Testis (tissue), 5 donors: ENCODE measurements at regions of chr3 and their contacts with region 1.

Region 1: GRCh38 chr3:101573449-101574387 is at the start of gene PCNP:
- DNase-seq: peak; percentile 100
- H3K4me3 ChIP-seq: peak within 1 kb of the TSS; percentile 88 to 90
- H3K27ac ChIP-seq: peak within 1 kb of the TSS; percentile 95 to 96
- H3K4me1 ChIP-seq: peaks cover 5% of the 10 kb centered on the region
- H3K27me3 ChIP-seq: no peaks in the 10 kb centered on the region
- CTCF ChIP-seq: peak; percentile 95 to 97 (median 95)
- POLR2A ChIP-seq: peak; percentile 59
- total RNA-seq, gene PCNP: 60.6 to 62.5 TPM

Region 2: GRCh38 chr3:101635954-101636798 is 62.5 kb after region 1 on chr3:
- intact Hi-C with region 1: no loop called
- DNase-seq: peak; percentile 65
- H3K4me3 ChIP-seq: no peak overlapping the region
- H3K27ac ChIP-seq: no peak overlapping the region
- H3K4me1 ChIP-seq: no peaks in the 10 kb centered on the region
- H3K27me3 ChIP-seq: no peaks in the 10 kb centered on the region
- CTCF ChIP-seq: peak in 2 of 3 experiments; percentile 41 to 51
- POLR2A ChIP-seq: no peak

Region 3: DNA sequence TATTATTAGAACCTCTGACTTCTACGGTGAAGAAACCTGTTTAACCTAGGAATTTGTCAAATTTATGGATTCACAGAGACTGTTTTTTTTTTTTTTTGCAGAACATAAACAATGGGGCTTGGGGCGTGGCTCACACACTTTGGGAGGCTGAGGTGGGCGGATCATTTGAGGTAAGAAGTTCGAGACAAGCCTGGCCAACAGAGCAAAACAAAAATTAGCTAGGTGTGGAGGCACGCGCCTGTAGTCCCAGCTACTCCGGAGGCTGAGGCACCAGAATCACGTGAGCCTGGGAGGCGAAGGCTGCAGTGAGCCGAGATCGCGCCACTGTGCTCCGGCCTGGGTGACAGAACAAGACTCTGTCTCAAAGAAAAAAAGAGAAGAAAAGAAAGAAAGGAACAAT is 100.2 kb after region 1 on chr3:
- intact Hi-C with region 1: no loop called
- DNase-seq: no peak
- H3K4me3 ChIP-seq: no peak overlapping the region
- H3K27ac ChIP-seq: no peak overlapping the region
- H3K4me1 ChIP-seq: peaks cover 18% of the 10 kb centered on the region
- H3K27me3 ChIP-seq: no peaks in the 10 kb centered on the region
- CTCF ChIP-seq: no peak
- POLR2A ChIP-seq: no peak

Region 4: DNA sequence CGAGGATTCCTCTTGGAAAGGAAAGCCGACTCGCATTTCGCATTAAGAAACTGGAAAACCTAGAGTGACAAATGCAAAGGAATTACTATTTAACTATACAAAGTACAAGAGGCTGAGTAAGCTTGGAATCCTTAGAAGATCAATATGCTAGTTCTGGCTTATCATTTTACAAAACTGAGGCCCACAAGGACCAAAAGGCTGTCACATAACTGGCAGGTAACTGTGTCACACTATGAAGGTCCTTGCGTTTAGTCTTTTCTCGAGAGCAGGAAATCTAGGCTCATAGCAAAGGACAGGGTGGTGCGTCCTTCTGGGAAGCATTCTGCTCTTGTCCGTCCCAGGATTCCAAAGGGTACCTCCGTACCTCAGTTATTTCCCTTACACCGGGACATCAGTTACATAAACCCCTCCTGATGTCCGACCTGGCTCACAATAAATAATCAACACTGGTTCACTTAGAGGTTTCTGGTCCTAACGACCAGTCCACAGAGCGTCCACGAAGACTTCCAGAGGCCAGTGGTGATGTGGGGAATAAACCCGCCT is 112.2 kb after region 1 on chr3:
- intact Hi-C with region 1: loop called (anchors 10 kb)
- DNase-seq: no peak
- H3K4me3 ChIP-seq: peak overlapping the region; percentile 73 to 84
- H3K27ac ChIP-seq: peak overlapping the region; percentile 91 to 94
- H3K4me1 ChIP-seq: peaks cover 16% of the 10 kb centered on the region
- H3K27me3 ChIP-seq: no peaks in the 10 kb centered on the region
- CTCF ChIP-seq: no peak
- POLR2A ChIP-seq: no peak

Region 5: GRCh38 chr3:101809178-101810021 is 235.7 kb after region 1 on chr3:
- intact Hi-C with region 1: no loop called
- DNase-seq: peak; percentile 18
- H3K4me3 ChIP-seq: no peak overlapping the region
- H3K27ac ChIP-seq: no peak overlapping the region
- H3K4me1 ChIP-seq: no peaks in the 10 kb centered on the region
- H3K27me3 ChIP-seq: no peaks in the 10 kb centered on the region
- CTCF ChIP-seq: peak; percentile 20 to 50 (median 42)
- POLR2A ChIP-seq: no peak

Region 6: DNA sequence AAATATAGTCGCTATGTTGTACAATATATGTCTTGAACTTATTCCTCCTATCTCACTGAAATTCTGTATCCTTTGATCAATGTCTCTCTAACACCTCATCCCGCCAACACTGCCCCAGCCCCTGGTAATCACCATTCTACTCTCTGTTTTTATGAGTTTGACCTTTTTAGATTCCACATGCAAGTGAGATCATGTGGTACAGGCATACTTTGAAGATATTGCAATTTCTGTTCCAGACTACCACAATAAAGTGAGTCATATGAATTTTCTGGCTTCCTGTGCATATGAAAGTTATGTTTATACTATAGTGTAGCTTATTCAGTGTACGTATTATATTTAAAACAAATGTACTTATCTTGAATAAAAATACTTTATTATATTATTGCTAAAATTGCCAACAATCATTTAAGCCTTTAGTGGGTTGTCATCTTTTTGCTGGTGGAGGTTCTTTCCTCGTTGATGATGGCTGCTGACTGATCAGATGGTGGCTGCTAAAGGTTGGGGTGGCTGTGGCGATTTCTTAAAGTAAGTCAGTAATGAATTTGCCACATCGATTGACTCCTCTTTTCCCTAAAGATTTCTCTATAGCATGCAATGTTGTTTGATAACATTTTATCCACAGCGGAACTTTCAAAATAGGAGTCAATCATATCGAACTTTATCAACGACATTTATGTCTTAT is 532.8 kb after region 1 on chr3:
- intact Hi-C with region 1: no loop called
- DNase-seq: no peak
- H3K4me3 ChIP-seq: no peak overlapping the region
- H3K27ac ChIP-seq: no peak overlapping the region
- H3K4me1 ChIP-seq: no peaks in the 10 kb centered on the region
- H3K27me3 ChIP-seq: no peaks in the 10 kb centered on the region
- CTCF ChIP-seq: no peak
- POLR2A ChIP-seq: no peak